ENCODE measurements at regions of chr5 and their contacts with region 1.

Region 1: GRCh38 chr5:32489791-32490582 is 45.4 kb upstream of the ZFR start:
- DNase-seq: peak; percentile 23 to 85
- H3K4me3 ChIP-seq: no peak overlapping the region
- H3K27ac ChIP-seq: no peak overlapping the region
- H3K4me1 ChIP-seq: no peaks in the 10 kb centered on the region
- H3K27me3 ChIP-seq: no peaks in the 10 kb centered on the region
- CTCF ChIP-seq: peak; percentile 53 to 76 (median 75)
- EP300 ChIP-seq: no peak
- POLR2A ChIP-seq: no peak
- RAD21 ChIP-seq: peak; percentile 80 to 85

Region 2: DNA sequence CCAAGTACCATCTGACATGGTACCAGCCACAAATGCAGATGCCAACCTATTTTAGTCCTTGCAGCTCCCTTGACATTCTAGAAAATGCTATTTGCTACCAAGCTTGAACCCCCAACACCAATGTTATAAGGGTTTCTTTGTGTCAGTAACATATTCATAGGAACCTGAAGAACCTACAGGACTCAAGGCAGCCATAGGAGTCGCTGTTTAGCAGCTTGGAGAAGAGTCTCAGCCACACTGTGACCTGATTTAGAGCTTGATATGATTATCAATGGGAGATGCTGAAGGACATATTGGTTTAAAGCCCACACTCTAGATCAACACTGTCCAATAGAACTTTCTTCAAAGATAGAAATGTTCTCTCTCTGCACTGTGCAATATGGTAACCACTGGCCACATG is 39.0 kb before region 1 on chr5:
- CTCF ChIA-PET with region 1: interaction called, 13 read pairs
- POLR2A ChIA-PET with region 1: no interaction called
- DNase-seq: peak in 1 of 2 experiments; percentile 36
- H3K4me3 ChIP-seq: no peak overlapping the region
- H3K27ac ChIP-seq: no peak overlapping the region
- H3K4me1 ChIP-seq: no peaks in the 10 kb centered on the region
- H3K27me3 ChIP-seq: no peaks in the 10 kb centered on the region; a peak in 2 of 7 replicates
- CTCF ChIP-seq: peak in 2 of 3 experiments; percentile 24 to 63; a peak in 2 of 4 replicates
- EP300 ChIP-seq: no peak
- POLR2A ChIP-seq: no peak
- RAD21 ChIP-seq: peak; percentile 49 to 62

Region 3: DNA sequence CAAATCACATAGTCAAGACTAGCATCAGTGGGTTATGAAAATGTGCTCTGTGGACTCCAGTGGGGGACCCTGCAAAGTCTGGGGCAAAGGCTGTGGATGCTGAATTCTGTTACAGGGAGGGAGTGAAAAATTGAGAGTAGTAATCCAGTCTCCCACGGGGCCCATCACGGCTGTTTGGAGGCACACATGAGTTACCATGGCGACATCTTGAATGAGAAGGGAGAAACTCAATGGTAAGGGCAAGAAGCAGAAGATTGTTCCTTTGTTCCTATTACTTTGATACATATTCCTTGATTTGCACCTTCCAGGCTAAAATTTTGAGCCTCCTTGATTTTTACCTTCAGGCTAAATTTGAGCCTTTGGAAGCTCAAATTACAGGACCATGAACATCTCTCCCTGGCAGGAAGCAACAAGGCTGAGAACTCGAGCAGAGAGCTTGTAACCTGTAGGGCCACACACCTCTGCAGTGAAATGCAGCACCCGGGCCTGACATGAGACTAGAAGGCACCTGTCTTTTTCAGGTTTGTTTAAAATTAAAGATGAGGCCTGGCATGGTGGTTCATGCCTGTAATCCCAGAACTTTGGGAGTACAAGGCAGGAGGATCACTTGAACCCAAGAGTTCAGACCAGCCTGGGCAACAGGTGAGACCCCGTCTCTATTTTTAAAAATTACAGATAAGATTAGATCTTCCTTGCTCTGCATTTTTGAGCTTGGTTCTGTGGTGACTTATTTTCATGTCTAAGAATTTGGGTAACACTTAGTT is 14.5 kb before region 1 on chr5:
- CTCF ChIA-PET with region 1: interaction called, 39 read pairs
- POLR2A ChIA-PET with region 1: interaction called, 3 read pairs
- DNase-seq: no peak
- H3K4me3 ChIP-seq: no peak overlapping the region
- H3K27ac ChIP-seq: peak overlapping the region; percentile 12; the same call in 1 of the 2 replicates
- H3K4me1 ChIP-seq: peaks cover 2 to 11% (median 9%) of the 10 kb centered on the region in 4 experiments; a peak in 6 of 7 replicates
- H3K27me3 ChIP-seq: no peaks in the 10 kb centered on the region
- CTCF ChIP-seq: no peak
- EP300 ChIP-seq: no peak
- POLR2A ChIP-seq: no peak
- RAD21 ChIP-seq: no peak

Region 4: DNA sequence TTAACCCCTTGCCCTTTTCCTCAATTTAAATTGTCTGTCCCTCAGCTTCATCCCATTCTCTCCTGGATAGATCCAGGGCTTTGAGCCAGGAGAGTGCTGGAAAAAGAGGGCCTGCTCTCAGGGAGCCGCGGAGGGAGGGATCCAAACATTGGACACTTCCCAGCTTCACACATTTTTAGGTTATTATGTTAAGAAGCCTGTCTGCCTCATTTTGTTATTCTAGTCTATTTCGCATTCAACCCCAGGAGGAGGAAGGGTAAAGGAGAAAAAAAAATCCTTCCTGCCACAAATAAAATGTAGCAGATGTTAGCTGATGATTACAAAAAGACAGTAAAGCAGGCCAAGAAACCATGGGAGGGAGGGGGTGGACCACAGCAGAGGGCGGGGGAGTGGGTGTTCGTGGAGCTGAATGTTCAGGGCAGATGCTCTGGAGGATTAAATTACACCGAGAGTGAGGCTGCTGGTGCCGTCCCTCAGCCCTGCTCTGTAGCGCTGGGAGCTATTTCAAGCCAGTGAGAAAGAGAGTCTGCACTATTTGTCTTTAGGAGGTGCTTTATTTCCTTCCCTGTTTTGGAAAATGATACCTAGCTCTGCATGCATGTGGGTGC is 15.1 kb after region 1 on chr5:
- CTCF ChIA-PET with region 1: interaction called, 93 read pairs
- POLR2A ChIA-PET with region 1: interaction called, 14 read pairs
- DNase-seq: no peak
- H3K4me3 ChIP-seq: no peak overlapping the region
- H3K27ac ChIP-seq: no peak overlapping the region
- H3K4me1 ChIP-seq: peaks cover 11 to 30% (median 16%) of the 10 kb centered on the region in 4 experiments
- H3K27me3 ChIP-seq: peaks cover 0 to 23% (median 15%) of the 10 kb centered on the region in 4 experiments; a peak in 4 of 7 replicates
- CTCF ChIP-seq: no peak
- EP300 ChIP-seq: no peak
- POLR2A ChIP-seq: no peak
- RAD21 ChIP-seq: no peak

Region 5: DNA sequence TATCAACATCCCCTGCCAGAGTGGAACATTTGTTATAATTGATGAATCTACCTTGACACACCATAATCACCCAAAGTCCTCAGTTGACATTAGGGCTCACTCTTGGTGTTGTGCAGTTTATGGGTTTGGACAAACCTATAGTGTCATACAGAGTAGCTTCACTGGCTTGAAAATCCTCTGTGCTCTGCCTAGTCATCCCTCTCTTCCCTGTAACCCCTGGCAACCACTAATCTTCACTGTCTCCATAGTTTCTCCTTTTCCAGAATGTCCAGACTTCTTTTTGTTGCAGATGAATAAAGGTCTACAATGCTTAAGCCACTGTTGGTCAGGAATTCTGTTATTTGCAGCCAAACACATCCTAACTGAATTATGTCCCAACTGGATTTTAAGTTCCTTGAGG is 72.9 kb after region 1 on chr5:
- CTCF ChIA-PET with region 1: interaction called, 10 read pairs
- POLR2A ChIA-PET with region 1: no interaction called
- DNase-seq: no peak
- H3K4me3 ChIP-seq: no peak overlapping the region
- H3K27ac ChIP-seq: no peak overlapping the region
- H3K4me1 ChIP-seq: no peaks in the 10 kb centered on the region
- H3K27me3 ChIP-seq: peaks cover 0 to 1% (median 0%) of the 10 kb centered on the region in 4 experiments; a peak in 1 of 7 replicates
- CTCF ChIP-seq: no peak
- EP300 ChIP-seq: no peak
- POLR2A ChIP-seq: no peak
- RAD21 ChIP-seq: no peak

Region 6: GRCh38 chr5:32613050-32613672 is 123.2 kb after region 1 on chr5:
- CTCF ChIA-PET with region 1: interaction called, 30 read pairs
- POLR2A ChIA-PET with region 1: no interaction called
- DNase-seq: peak; percentile 25 to 94
- H3K4me3 ChIP-seq: no peak overlapping the region
- H3K27ac ChIP-seq: no peak overlapping the region
- H3K4me1 ChIP-seq: no peaks in the 10 kb centered on the region
- H3K27me3 ChIP-seq: no peaks in the 10 kb centered on the region
- CTCF ChIP-seq: peak; percentile 72 to 89 (median 88)
- EP300 ChIP-seq: no peak
- POLR2A ChIP-seq: no peak
- RAD21 ChIP-seq: peak; percentile 93 to 97

Region 7: GRCh38 chr5:32703957-32704356 is 214.0 kb after region 1 on chr5:
- CTCF ChIA-PET with region 1: no interaction called
- POLR2A ChIA-PET with region 1: no interaction called
- DNase-seq: no peak
- H3K4me3 ChIP-seq: no peak overlapping the region
- H3K27ac ChIP-seq: no peak overlapping the region
- H3K4me1 ChIP-seq: 0 out of 7 replicates have a peak, but pooled peaks cover 0 to 1% (median under 1%) of the 10 kb centered on the region in 4 experiments
- H3K27me3 ChIP-seq: peaks cover under 1 to 7% (median 5%) of the 10 kb centered on the region in 4 experiments; a peak in 6 of 7 replicates
- CTCF ChIP-seq: no peak
- EP300 ChIP-seq: no peak
- POLR2A ChIP-seq: no peak
- RAD21 ChIP-seq: no peak

Measured in H1 (cell line).